Activated T-helper 1 cell treated with anti-CD3 and anti-CD28 coated beads, Interleukin-12 subunit alpha, Interleukin-12 subunit beta, Interleukin-2, Interleukin-4 antibody, amounts not matched to agents 30 ng/mL and 10 ng/mL and 1 ng/mL, durations not matched to agents 14 hours and 24 hours and 36 hours (primary cell): ENCODE measurements at regions of chr1 and their contacts with region 1.

Region 1: DNA sequence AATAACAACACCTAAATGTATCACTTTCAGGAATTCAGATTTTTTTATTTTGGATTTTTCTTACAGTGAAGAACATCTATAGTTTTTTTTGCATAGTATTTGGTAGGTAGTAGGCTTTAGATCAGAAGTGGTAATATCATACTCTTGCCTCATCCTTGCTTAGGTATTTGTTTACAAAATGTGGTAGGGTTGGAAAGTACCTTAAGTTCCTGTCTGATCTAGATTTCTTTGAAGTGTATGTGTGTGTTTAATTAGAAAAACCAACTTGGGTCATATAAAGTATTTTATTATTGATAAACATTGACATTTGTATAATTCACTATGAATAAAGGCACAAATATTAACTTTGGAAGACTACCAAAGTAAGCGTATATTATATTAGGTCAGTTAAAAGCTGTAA is 85.3 kb upstream of the GPR88 start:
- DNase-seq: no peak
- H3K4me3 Mint-ChIP-seq: no peak overlapping the region
- H3K27ac Mint-ChIP-seq: peak overlapping the region; percentile 59
- H3K4me1 Mint-ChIP-seq: peaks cover 77% of the 10 kb centered on the region
- H3K27me3 Mint-ChIP-seq: no peaks in the 10 kb centered on the region

Region 2: DNA sequence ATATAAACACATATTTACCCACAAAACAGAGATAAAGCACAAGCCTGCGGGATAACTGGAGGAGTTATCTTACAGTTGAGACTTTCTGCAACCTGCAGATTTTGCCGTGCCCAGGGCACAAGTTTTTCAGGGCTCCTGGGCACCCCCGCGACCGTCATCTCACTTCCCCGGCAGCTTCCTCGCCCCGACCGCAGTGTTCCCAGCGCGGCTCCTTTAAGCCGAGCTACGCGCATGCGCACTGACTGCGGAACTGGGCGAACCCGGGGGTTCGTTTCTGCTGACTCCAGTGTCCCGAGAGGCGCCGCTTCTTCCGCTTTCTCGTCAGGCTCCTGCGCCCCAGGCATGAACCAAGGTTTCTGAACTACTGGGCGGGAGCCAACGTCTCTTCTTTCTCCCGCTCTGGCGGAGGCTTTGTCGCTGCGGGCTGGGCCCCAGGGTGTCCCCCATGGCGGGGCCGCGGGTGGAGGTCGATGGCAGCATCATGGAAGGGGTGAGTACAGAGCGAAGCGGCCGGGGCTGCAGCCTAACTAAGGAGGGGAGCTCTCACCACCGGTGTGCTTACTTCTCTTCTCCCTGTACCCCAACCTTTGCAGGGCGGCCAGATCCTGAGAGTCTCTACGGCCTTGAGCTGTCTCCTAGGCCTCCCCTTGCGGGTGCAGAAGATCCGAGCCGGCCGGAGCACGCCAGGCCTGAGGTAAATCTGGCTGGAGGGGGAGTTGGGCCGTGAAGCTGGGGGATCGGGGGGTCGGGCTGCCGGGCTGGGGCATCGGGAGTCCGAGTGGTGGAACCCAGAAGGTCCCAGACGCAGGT is 186.5 kb before region 1 on chr1 and contains the start of gene RTCA:
- intact Hi-C with region 1: loop called (anchors 2 kb)
- DNase-seq: peak; percentile 94
- H3K4me3 Mint-ChIP-seq: peak within 1 kb of the TSS; percentile 100
- H3K27ac Mint-ChIP-seq: peak within 1 kb of the TSS; percentile 100
- H3K4me1 Mint-ChIP-seq: peaks cover 50% of the 10 kb centered on the region
- H3K27me3 Mint-ChIP-seq: peaks cover 4% of the 10 kb centered on the region
- total RNA-seq, gene RTCA: 48.1 and 52.0 TPM in 2 replicates

Region 3: DNA sequence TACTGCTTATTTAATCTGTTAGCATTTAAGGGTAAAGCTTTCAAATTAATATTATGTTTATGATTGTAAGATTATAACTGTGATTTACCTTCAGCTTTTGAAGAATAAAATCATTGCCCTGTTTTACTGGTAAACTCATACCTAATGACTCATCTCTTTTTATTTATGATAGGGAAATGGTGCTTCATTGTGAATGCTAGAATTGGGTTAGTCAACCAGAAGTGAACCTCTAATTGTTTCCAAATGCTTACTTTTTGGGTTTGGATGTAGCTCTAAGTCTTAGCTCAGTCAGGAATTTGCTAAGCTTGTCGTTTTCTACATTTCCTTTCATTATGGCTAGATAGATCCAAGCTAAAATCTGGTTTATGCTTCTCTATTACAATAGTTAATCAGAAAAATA is 502.7 kb after region 1 on chr1:
- intact Hi-C with region 1: no loop called
- DNase-seq: no peak
- H3K4me3 Mint-ChIP-seq: no peak overlapping the region
- H3K27ac Mint-ChIP-seq: no peak overlapping the region
- H3K4me1 Mint-ChIP-seq: peaks cover 40% of the 10 kb centered on the region
- H3K27me3 Mint-ChIP-seq: no peaks in the 10 kb centered on the region